Gastrocnemius medialis (tissue), 4 donors: ENCODE measurements at regions of chr4 and their contacts with region 1.

Region 1: DNA sequence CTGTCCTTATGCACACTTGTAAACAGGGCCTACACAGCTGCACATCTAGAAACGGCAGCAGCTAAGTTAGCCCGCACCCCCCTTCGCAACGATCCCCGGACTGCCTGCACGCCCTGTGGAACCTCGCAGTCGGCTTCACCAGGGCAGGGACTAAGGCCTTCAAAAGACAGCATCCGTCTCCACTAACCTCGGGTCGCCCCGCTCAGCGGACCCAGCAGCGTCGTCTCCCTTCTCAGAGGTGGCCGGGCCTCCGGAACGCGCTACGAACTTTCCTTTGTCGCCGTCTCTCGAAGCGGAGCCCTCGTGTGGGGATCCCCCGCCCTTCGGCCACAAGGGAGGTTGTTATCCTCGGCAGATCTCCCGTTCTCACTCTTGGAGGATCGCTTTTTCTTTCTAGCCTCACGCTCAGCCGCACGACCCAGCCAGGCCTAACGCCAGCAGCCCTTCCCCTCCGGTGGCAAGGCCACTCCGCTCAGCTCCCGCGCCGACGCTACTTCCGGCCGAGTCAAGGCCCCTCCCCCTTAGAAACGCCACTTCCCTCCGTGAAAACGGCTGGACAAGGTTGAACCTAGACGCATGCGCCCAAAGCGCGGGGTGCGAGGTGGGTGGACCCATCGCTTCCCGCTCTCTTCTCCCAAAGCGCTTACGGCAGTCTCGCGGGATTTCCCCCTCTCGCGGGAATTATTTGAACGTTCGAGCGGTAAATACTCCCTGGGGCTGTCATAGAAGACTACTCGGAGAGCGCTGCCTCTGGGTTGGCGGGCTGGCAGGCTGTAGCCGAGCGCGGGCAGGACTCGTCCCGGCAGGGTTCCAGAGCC is at the starts of genes DCAF16 and NCAPG:
- DNase-seq: peak; percentile 98 to 99
- ATAC-seq: peak; percentile 99 to 100
- H3K4me3 ChIP-seq: peak within 1 kb of the TSS; percentile 82 to 95 (median 88)
- H3K27ac ChIP-seq: peak within 1 kb of the TSS; percentile 94 to 99 (median 97)
- H3K4me1 ChIP-seq: peaks cover 43 to 48% of the 10 kb centered on the region in 2 donors
- H3K27me3 ChIP-seq: no peaks in the 10 kb centered on the region
- CTCF ChIP-seq: no peak
- POLR2A ChIP-seq: peak; percentile 95
- total RNA-seq, gene DCAF16: 5.8 to 12.3 (median 8.2) TPM
- total RNA-seq, gene NCAPG: 0.25 to 0.49 (median 0.33) TPM in 3 of 4 donors, not detected in the other

Region 2: DNA sequence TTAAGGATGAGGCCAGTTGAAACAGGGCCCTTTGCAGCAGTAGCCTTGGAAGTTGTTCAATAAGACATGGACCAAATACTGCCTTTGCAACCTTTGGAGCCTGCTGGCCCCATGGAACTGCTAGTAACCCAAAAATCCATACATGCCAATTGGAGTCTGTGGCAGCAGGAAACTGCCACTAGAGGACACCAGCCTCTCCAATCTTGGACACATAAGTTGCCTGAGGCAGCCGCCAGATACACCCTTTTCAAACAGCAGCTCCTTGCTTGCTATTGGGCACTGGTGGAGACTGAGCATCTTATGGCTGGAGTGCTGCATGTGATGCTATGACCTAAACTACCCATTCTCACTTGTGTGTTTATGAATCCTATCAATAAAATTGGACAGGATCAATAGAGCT is 248.3 kb before region 1 on chr4:
- in situ Hi-C with region 1: loop called in 2 of 4 experiments (anchors 25 kb)
- intact Hi-C with region 1: no loop called
- DNase-seq: no peak
- ATAC-seq: no peak
- H3K4me3 ChIP-seq: no peak overlapping the region
- H3K27ac ChIP-seq: no peak overlapping the region
- H3K4me1 ChIP-seq: no peaks in the 10 kb centered on the region
- H3K27me3 ChIP-seq: no peaks in the 10 kb centered on the region
- CTCF ChIP-seq: no peak
- POLR2A ChIP-seq: no peak

Region 3: DNA sequence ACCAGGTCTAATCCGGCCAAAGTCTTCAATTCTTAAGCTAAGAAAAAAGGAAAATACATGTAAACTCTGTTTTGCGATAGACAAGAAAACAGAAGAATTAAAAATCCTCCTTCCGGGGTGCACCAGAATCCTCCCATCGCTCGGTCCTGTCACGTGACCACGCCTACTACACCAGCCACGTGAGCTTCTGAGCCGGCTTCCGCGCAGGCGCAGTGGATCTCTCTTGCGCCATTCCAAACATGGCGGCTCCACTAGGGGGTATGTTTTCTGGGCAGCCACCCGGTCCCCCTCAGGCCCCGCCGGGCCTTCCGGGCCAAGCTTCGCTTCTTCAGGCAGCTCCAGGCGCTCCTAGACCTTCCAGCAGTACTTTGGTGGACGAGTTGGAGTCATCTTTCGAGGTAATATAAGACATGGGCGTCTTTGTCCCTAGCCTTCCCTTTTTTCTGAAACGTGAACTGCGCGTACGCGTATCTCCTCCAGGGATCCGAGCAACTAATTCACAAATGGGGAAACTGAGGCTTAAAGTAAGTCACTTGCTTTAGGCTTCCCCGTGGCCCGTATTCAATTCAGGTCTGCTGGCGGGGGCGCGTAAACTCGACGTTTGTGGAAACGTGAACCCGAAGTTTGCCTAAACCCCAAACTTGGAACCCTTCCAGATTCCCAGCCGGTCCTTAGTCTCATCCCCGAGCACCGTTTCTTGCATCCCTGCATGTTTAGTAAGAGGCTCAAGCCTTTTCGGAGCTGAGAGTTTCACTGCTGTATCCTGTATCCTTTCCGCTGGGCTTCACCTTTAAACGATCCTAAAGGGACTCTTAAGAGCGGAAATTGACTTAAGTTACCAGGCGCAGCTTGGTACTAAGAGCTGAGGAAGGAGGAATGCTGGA is 195.8 kb before region 1 on chr4 and contains the start of gene MED28:
- in situ Hi-C with region 1: loop called in 1 of 4 experiments (anchors 10 kb)
- intact Hi-C with region 1: no loop called
- DNase-seq: peak; percentile 94 to 95
- ATAC-seq: peak; percentile 88 to 90
- H3K4me3 ChIP-seq: peak within 1 kb of the TSS; percentile 70 to 98 (median 92)
- H3K27ac ChIP-seq: peak within 1 kb of the TSS; percentile 91 to 98 (median 97)
- H3K4me1 ChIP-seq: peaks cover 45% of the 10 kb centered on the region in 2 donors
- H3K27me3 ChIP-seq: no peaks in the 10 kb centered on the region
- CTCF ChIP-seq: peak in 3 of 5 experiments; percentile 23 to 51 (median 24)
- POLR2A ChIP-seq: peak; percentile 96 to 97
- total RNA-seq, gene MED28: 4.5 to 20.0 (median 17.5) TPM

Region 4: GRCh38 chr4:17762726-17763125 is 47.7 kb before region 1 on chr4:
- in situ Hi-C with region 1: no loop called
- intact Hi-C with region 1: loop called (anchors 5 kb)
- DNase-seq: peak in 1 of 2 donors; percentile 48
- ATAC-seq: peak; percentile 72
- H3K4me3 ChIP-seq: no peak overlapping the region
- H3K27ac ChIP-seq: peak overlapping the region; percentile 54 to 71 (median 62)
- H3K4me1 ChIP-seq: peaks cover 10 to 16% of the 10 kb centered on the region in 2 donors
- H3K27me3 ChIP-seq: no peaks in the 10 kb centered on the region
- CTCF ChIP-seq: peak in 4 of 5 experiments; percentile 23 to 48 (median 26)
- POLR2A ChIP-seq: no peak

Region 5: GRCh38 chr4:18593445-18594002 is 783.1 kb after region 1 on chr4:
- in situ Hi-C with region 1: loop called in 3 of 4 experiments (anchors 5 to 25 kb)
- intact Hi-C with region 1: no loop called
- DNase-seq: peak in 1 of 2 donors; percentile 17
- ATAC-seq: peak in 1 of 2 donors; percentile 58
- H3K4me3 ChIP-seq: no peak overlapping the region
- H3K27ac ChIP-seq: no peak overlapping the region
- H3K4me1 ChIP-seq: no peaks in the 10 kb centered on the region
- H3K27me3 ChIP-seq: no peaks in the 10 kb centered on the region
- CTCF ChIP-seq: peak; percentile 27 to 80 (median 64)
- POLR2A ChIP-seq: no peak